Calu3 (cell line): ENCODE measurements at regions of chr1 and their contacts with region 1.

Region 1: GRCh38 chr1:176897350-176898236 is 266.9 kb downstream of the ASTN1 start:
- DNase-seq: peak; percentile 63
- H3K4me3 Mint-ChIP-seq: peak overlapping the region; percentile 3
- H3K27ac Mint-ChIP-seq: no peak overlapping the region
- H3K4me1 Mint-ChIP-seq: peaks cover 10% of the 10 kb centered on the region
- H3K27me3 Mint-ChIP-seq: peaks cover 86% of the 10 kb centered on the region
- CTCF ChIP-seq: peak; percentile 97

Region 2: GRCh38 chr1:176733661-176734060 is 163.9 kb before region 1 on chr1:
- CTCF ChIA-PET with region 1: no interaction called
- intact Hi-C with region 1: no loop called
- DNase-seq: no peak
- H3K4me3 Mint-ChIP-seq: no peak overlapping the region
- H3K27ac Mint-ChIP-seq: no peak overlapping the region
- H3K4me1 Mint-ChIP-seq: no peaks in the 10 kb centered on the region
- H3K27me3 Mint-ChIP-seq: peaks cover 13% of the 10 kb centered on the region
- CTCF ChIP-seq: no peak

Region 3: GRCh38 chr1:176773038-176773437 is 124.6 kb before region 1 on chr1:
- CTCF ChIA-PET with region 1: no interaction called
- intact Hi-C with region 1: no loop called
- DNase-seq: no peak
- H3K4me3 Mint-ChIP-seq: no peak overlapping the region
- H3K27ac Mint-ChIP-seq: no peak overlapping the region
- H3K4me1 Mint-ChIP-seq: no peaks in the 10 kb centered on the region
- H3K27me3 Mint-ChIP-seq: peaks cover 49% of the 10 kb centered on the region
- CTCF ChIP-seq: no peak

Region 4: GRCh38 chr1:177181631-177182291 is 284.2 kb after region 1 on chr1:
- CTCF ChIA-PET with region 1: interaction called, 3 read pairs
- intact Hi-C with region 1: loop called (anchors 1 kb)
- DNase-seq: peak; percentile 84
- H3K4me3 Mint-ChIP-seq: peak overlapping the region; percentile 62
- H3K27ac Mint-ChIP-seq: no peak overlapping the region
- H3K4me1 Mint-ChIP-seq: peaks cover 10% of the 10 kb centered on the region
- H3K27me3 Mint-ChIP-seq: peaks cover 1% of the 10 kb centered on the region
- CTCF ChIP-seq: peak; percentile 93

Region 5: GRCh38 chr1:177355595-177355994 is 458.0 kb after region 1 on chr1:
- CTCF ChIA-PET with region 1: interaction called, 7 read pairs
- intact Hi-C with region 1: loop called (anchors 1 kb)
- DNase-seq: peak; percentile 63
- H3K4me3 Mint-ChIP-seq: no peak overlapping the region
- H3K27ac Mint-ChIP-seq: no peak overlapping the region
- H3K4me1 Mint-ChIP-seq: no peaks in the 10 kb centered on the region
- H3K27me3 Mint-ChIP-seq: peaks cover 24% of the 10 kb centered on the region
- CTCF ChIP-seq: peak; percentile 48

Region 6: GRCh38 chr1:177913762-177914540 is 1016.4 kb after region 1 on chr1:
- CTCF ChIA-PET with region 1: interaction called, 3 read pairs
- intact Hi-C with region 1: loop called (anchors 2 kb)
- DNase-seq: peak; percentile 49
- H3K4me3 Mint-ChIP-seq: no peak overlapping the region
- H3K27ac Mint-ChIP-seq: no peak overlapping the region
- H3K4me1 Mint-ChIP-seq: no peaks in the 10 kb centered on the region
- H3K27me3 Mint-ChIP-seq: peaks cover 32% of the 10 kb centered on the region
- CTCF ChIP-seq: peak; percentile 44

Region 7: GRCh38 chr1:177948336-177948972 is 1050.9 kb after region 1 on chr1:
- CTCF ChIA-PET with region 1: interaction called, 7 read pairs
- intact Hi-C with region 1: loop called (anchors 1 kb)
- DNase-seq: peak; percentile 74
- H3K4me3 Mint-ChIP-seq: no peak overlapping the region
- H3K27ac Mint-ChIP-seq: no peak overlapping the region
- H3K4me1 Mint-ChIP-seq: no peaks in the 10 kb centered on the region
- H3K27me3 Mint-ChIP-seq: no peaks in the 10 kb centered on the region
- CTCF ChIP-seq: peak; percentile 93